T-cell (primary cell): ENCODE measurements at regions of chr11 and their contacts with region 1.

Region 1: DNA sequence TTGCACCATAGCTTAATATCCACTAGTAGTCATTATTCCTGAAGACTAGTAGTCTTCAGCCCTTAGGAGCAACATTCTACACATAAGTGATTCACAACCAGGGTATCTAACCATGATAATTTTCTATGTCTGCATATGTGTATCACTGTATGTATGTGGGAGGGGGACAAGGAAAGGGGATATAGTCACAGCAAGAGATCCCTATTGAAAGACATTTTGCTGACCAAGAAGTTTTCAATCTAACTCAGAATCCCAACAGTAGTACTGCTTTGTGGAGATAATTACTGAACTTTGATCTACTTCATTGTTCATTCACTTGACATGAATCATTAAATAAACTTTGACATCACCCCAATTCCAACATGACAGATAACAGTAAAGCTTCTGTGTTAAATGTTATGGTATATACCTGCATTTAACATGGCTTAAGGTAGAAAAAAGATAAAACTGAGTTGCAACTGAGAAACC is 10.3 kb downstream of the PIK3C2A start:
- DNase-seq: no peak
- ATAC-seq: no peak
- H3K4me3 ChIP-seq: no peak overlapping the region
- H3K4me3 Mint-ChIP-seq: no peak overlapping the region
- H3K27ac ChIP-seq: no peak overlapping the region
- H3K27ac Mint-ChIP-seq: no peak overlapping the region
- H3K4me1 ChIP-seq: no peaks in the 10 kb centered on the region
- H3K4me1 Mint-ChIP-seq: peaks cover 22 to 25% (median 24%) of the 10 kb centered on the region in 3 donors
- H3K27me3 ChIP-seq: no peaks in the 10 kb centered on the region
- H3K27me3 Mint-ChIP-seq: no peaks in the 10 kb centered on the region

Region 2: GRCh38 chr11:17173332-17173731 is 24.1 kb before region 1 on chr11:
- CTCF ChIA-PET with region 1: no interaction called
- POLR2A ChIA-PET with region 1: interaction called, 3 to 11 read pairs
- DNase-seq: no peak
- ATAC-seq: no peak
- H3K4me3 ChIP-seq: no peak overlapping the region
- H3K4me3 Mint-ChIP-seq: no peak overlapping the region
- H3K27ac ChIP-seq: no peak overlapping the region
- H3K27ac Mint-ChIP-seq: no peak overlapping the region
- H3K4me1 ChIP-seq: no peaks in the 10 kb centered on the region
- H3K4me1 Mint-ChIP-seq: peaks cover 19 to 27% (median 23%) of the 10 kb centered on the region in 3 donors
- H3K27me3 ChIP-seq: no peaks in the 10 kb centered on the region
- H3K27me3 Mint-ChIP-seq: no peaks in the 10 kb centered on the region